PC-3 (cell line): ENCODE measurements at regions of chr10 and their contacts with region 1.

Region 1: GRCh38 chr10:74669210-74669609 is 157.2 kb upstream of the KAT6B start:
- DNase-seq: no peak
- ATAC-seq: no peak
- H3K4me3 ChIP-seq: no peak overlapping the region
- H3K27ac ChIP-seq: no peak overlapping the region
- H3K4me1 ChIP-seq: no peaks in the 10 kb centered on the region
- H3K27me3 ChIP-seq: no peaks in the 10 kb centered on the region
- CTCF ChIP-seq: no peak

Region 2: GRCh38 chr10:74851831-74852230 is 182.6 kb after region 1 on chr10:
- CTCF ChIA-PET with region 1: no interaction called
- POLR2A ChIA-PET with region 1: interaction called, 10 read pairs
- intact Hi-C with region 1: no loop called
- DNase-seq: no peak
- ATAC-seq: no peak
- H3K4me3 ChIP-seq: no peak overlapping the region
- H3K27ac ChIP-seq: no peak overlapping the region
- H3K4me1 ChIP-seq: no peaks in the 10 kb centered on the region
- H3K27me3 ChIP-seq: no peaks in the 10 kb centered on the region
- CTCF ChIP-seq: no peak